ENCODE measurements at regions of chr17 and their contacts with region 1.

Region 1: GRCh38 chr17:28726226-28727130 is at the start of gene TLCD1:
- DNase-seq: peak; percentile 77 to 82
- ATAC-seq: peak; percentile 59 to 65
- H3K4me3 ChIP-seq: peak within 1 kb of the TSS; percentile 70 to 92 (median 80)
- H3K27ac ChIP-seq: peak within 1 kb of the TSS; percentile 56 to 99 (median 98)
- H3K4me1 ChIP-seq: peaks cover 34 to 36% of the 10 kb centered on the region in 2 donors
- H3K27me3 ChIP-seq: no peaks in the 10 kb centered on the region
- CTCF ChIP-seq: peak; percentile 98 to 100 (median 99)
- POLR2A ChIP-seq: no peak
- total RNA-seq, gene TLCD1: 0.46 to 0.82 (median 0.75) TPM in 3 of 4 donors, not detected in the other

Region 2: GRCh38 chr17:28750178-28751047 is 23.9 kb after region 1 on chr17:
- in situ Hi-C with region 1: no loop called
- intact Hi-C with region 1: loop called (anchors 1 kb)
- DNase-seq: peak; percentile 84 to 90
- ATAC-seq: peak; percentile 81 to 93
- H3K4me3 ChIP-seq: no peak overlapping the region
- H3K27ac ChIP-seq: no peak overlapping the region
- H3K4me1 ChIP-seq: peaks cover 7 to 20% of the 10 kb centered on the region in 2 donors
- H3K27me3 ChIP-seq: no peaks in the 10 kb centered on the region
- CTCF ChIP-seq: peak; percentile 93 to 100 (median 98)
- POLR2A ChIP-seq: no peak

Region 3: DNA sequence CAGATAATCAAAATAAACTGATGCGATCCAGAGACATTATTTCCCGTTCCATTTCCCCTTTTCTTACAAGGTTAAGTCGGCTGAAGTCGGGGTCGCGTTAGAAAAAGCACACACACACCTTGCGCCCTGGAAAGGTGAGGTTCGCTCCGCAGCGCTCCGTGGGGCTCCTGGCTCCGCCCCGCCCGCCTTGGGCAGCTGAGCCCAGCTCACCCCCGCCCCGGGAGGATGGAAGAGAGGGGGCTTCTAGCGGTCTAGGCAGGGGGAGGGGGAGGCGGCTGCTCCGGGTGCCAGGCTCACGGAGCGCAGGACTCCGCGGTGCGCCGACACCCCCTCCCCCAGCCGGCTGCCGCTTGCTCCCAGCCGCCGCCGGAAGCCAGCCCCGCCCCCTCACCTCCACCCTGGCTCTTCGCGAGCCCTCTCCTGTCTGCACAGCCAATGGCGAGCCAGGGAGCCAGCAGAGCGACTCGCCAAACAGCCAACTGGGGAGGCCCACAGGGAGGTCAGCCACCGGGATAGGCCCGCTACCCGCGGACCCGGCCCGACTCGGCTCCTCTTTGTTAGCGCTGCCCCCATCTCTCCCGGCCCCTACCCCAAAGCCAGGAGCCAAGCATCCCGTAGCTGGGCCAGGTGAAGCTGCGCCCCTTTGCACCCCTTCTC is 85.7 kb after region 1 on chr17:
- in situ Hi-C with region 1: no loop called
- intact Hi-C with region 1: loop called (anchors 2 kb)
- DNase-seq: peak; percentile 98
- ATAC-seq: peak; percentile 84 to 87
- H3K4me3 ChIP-seq: peak overlapping the region; percentile 79 to 95 (median 89)
- H3K27ac ChIP-seq: peak overlapping the region; percentile 93 to 94 (median 94)
- H3K4me1 ChIP-seq: peaks cover 37 to 44% of the 10 kb centered on the region in 2 donors
- H3K27me3 ChIP-seq: no peaks in the 10 kb centered on the region
- CTCF ChIP-seq: no peak
- POLR2A ChIP-seq: peak; percentile 81 to 85

Region 4: DNA sequence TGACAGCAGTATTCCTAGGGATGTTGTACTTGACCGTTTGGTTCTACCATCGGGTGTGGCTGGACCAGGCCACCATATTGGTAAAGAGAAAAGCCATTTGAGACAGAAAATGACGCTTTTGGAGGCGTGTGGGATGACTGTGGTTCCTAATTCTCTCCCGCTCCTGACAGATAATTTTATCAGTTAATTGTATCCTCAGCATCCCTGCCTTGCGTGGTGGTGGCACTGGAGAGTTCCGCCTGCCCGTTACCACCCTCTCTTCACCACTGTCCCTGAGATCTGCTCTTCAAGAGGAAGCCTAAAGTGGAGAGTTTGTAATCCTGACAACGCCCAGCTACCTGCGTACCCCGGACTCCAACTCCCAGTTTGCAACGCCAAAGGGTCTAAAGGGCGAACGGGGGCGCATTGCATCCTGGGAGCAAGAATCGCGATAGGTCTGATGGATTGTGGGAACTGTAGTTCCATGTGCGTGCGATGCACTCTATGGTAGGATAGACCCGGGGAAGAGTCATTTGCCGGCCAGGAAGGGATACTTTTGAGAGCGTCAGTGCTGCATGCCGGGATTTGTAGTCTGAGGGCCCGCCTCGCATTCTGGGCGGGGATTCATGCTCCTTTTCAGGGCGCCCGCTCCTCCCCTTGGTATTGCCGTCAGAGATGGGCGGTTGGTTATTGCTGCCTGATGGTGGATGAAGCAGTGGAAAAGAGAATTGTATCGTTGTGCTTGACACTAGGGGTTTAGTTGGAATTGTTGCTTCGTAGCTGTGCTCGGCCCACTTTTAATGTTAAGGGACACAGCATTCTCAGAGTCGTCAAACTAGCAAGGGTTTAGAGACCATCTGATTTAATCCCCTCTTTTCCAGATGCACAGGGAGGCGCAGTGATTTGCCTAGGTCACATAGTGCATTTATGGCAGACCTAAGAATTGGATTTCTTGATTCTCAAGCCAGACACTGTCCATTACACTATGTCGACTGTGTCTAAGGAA is 225.8 kb after region 1 on chr17:
- in situ Hi-C with region 1: no loop called
- intact Hi-C with region 1: loop called (anchors 1 kb)
- DNase-seq: peak; percentile 98 to 99
- ATAC-seq: peak; percentile 80 to 85
- H3K4me3 ChIP-seq: peak overlapping the region; percentile 49 to 88 (median 68)
- H3K27ac ChIP-seq: peak overlapping the region; percentile 93 to 96 (median 95)
- H3K4me1 ChIP-seq: peaks cover 22 to 25% of the 10 kb centered on the region in 2 donors
- H3K27me3 ChIP-seq: no peaks in the 10 kb centered on the region
- CTCF ChIP-seq: no peak
- POLR2A ChIP-seq: peak; percentile 55 to 84

Region 5: GRCh38 chr17:29140051-29140621 is 413.7 kb after region 1 on chr17:
- in situ Hi-C with region 1: no loop called
- intact Hi-C with region 1: no loop called
- DNase-seq: peak; percentile 92 to 95
- ATAC-seq: peak; percentile 58
- H3K4me3 ChIP-seq: peak overlapping the region; percentile 59 to 71 (median 62)
- H3K27ac ChIP-seq: peak overlapping the region; percentile 92 to 98 (median 96)
- H3K4me1 ChIP-seq: peaks cover 62 to 73% of the 10 kb centered on the region in 2 donors
- H3K27me3 ChIP-seq: no peaks in the 10 kb centered on the region
- CTCF ChIP-seq: no peak
- POLR2A ChIP-seq: peak; percentile 94 to 97